ENCODE measurements at regions of chr3 and their contacts with region 1.

Region 1: DNA sequence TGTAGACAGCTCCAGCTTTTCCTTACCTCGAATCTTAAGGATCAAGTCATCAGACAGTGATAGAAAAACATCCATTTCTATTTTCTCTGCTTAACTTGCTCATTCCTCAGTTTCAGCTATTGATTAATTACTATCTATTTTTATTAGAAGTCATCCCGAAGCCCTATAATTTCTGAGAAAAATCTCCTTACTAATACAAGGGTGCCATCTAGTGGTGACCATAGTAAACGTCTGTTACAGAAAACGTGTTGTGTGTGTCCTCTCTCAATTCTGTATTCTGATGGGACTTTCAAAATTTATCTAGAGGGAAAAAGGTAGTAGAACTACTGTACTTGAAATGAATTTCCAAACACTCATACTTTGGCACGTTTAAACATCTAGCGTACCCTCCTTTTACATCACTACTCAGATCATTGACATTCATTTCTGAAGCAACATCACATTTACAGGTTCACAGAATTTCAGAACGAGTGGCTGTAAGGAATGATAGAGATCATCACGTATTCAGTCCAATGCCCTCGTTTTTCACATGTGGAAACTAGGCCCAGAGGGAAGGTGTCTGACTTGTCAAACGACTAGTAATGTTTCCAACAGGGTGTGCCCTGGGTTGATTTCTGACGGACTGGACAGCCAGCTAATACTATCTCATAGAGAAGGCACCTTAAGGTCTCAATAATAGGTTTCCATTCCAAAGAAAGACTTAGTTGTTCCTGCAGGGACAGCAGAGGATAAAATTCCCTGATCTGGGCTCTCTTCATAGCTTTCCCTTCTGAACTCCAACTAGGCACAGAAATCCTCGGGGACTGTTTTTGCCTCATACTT is 25.6 kb downstream of the HACD2 start:
- DNase-seq: peak; percentile 68
- ATAC-seq: peak; percentile 51
- H3K4me3 ChIP-seq: no peak overlapping the region
- H3K4me3 Mint-ChIP-seq: no peak overlapping the region
- H3K27ac ChIP-seq: no peak overlapping the region
- H3K27ac Mint-ChIP-seq: no peak overlapping the region
- H3K4me1 ChIP-seq: no peaks in the 10 kb centered on the region
- H3K4me1 Mint-ChIP-seq: no peaks in the 10 kb centered on the region
- H3K27me3 ChIP-seq: no peaks in the 10 kb centered on the region
- H3K27me3 Mint-ChIP-seq: no peaks in the 10 kb centered on the region
- CTCF ChIP-seq: peak; percentile 94

Region 2: GRCh38 chr3:123328851-123329635 is 230.2 kb before region 1 on chr3:
- CTCF ChIA-PET with region 1: interaction called, 36 read pairs
- POLR2A ChIA-PET with region 1: no interaction called
- intact Hi-C with region 1: no loop called
- DNase-seq: peak; percentile 73
- ATAC-seq: peak; percentile 73
- H3K4me3 ChIP-seq: no peak overlapping the region
- H3K4me3 Mint-ChIP-seq: no peak overlapping the region
- H3K27ac ChIP-seq: no peak overlapping the region
- H3K27ac Mint-ChIP-seq: no peak overlapping the region
- H3K4me1 ChIP-seq: no peaks in the 10 kb centered on the region
- H3K4me1 Mint-ChIP-seq: no peaks in the 10 kb centered on the region
- H3K27me3 ChIP-seq: peaks cover 0 to 2% (median 0%) of the 10 kb centered on the region in 4 experiments
- H3K27me3 Mint-ChIP-seq: peaks cover 12% of the 10 kb centered on the region
- CTCF ChIP-seq: peak; percentile 89

Region 3: GRCh38 chr3:123449102-123449996 is 109.9 kb before region 1 on chr3:
- CTCF ChIA-PET with region 1: interaction called, 4 read pairs
- POLR2A ChIA-PET with region 1: no interaction called
- intact Hi-C with region 1: loop called (anchors 2 kb)
- DNase-seq: peak; percentile 42
- ATAC-seq: no peak
- H3K4me3 ChIP-seq: peak overlapping the region in 4 of 5 experiments; percentile 21 to 65 (median 51)
- H3K4me3 Mint-ChIP-seq: peak overlapping the region; percentile 71
- H3K27ac ChIP-seq: no peak overlapping the region
- H3K27ac Mint-ChIP-seq: no peak overlapping the region
- H3K4me1 ChIP-seq: peaks cover 10 to 13% of the 10 kb centered on the region in 2 donors
- H3K4me1 Mint-ChIP-seq: peaks cover 10% of the 10 kb centered on the region
- H3K27me3 ChIP-seq: peaks cover 0 to 54% (median 26%) of the 10 kb centered on the region in 4 experiments
- H3K27me3 Mint-ChIP-seq: peaks cover 47% of the 10 kb centered on the region
- CTCF ChIP-seq: no peak

Region 4: DNA sequence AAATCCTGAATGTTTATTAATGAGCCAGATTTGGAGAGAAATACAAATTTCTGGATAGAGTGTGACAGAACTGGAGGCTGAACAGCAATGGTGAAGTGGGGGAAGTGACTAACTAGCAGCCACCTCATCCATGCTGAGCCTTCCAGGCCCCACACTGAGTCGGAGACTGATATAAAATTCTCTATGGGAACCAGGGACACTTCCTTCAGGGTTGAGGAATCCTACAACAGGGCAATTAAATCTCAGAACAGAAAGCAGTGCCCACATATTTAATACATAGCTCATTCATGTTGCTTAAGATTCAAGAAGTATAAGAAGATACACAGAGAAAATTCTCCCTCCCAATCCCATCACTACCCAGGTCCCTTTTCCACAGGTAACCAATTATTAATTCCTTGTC is 23.7 kb before region 1 on chr3:
- CTCF ChIA-PET with region 1: interaction called, 13 read pairs
- POLR2A ChIA-PET with region 1: no interaction called
- intact Hi-C with region 1: no loop called
- DNase-seq: no peak
- ATAC-seq: no peak
- H3K4me3 ChIP-seq: no peak overlapping the region
- H3K4me3 Mint-ChIP-seq: no peak overlapping the region
- H3K27ac ChIP-seq: no peak overlapping the region
- H3K27ac Mint-ChIP-seq: no peak overlapping the region
- H3K4me1 ChIP-seq: no peaks in the 10 kb centered on the region
- H3K4me1 Mint-ChIP-seq: no peaks in the 10 kb centered on the region
- H3K27me3 ChIP-seq: no peaks in the 10 kb centered on the region
- H3K27me3 Mint-ChIP-seq: no peaks in the 10 kb centered on the region
- CTCF ChIP-seq: no peak

Region 5: GRCh38 chr3:123576122-123576521 is 16.9 kb after region 1 on chr3:
- CTCF ChIA-PET with region 1: interaction called, 31 read pairs
- POLR2A ChIA-PET with region 1: no interaction called
- intact Hi-C with region 1: no loop called
- DNase-seq: peak; percentile 62
- ATAC-seq: peak; percentile 81
- H3K4me3 ChIP-seq: peak overlapping the region in 1 of 5 experiments; percentile 8
- H3K4me3 Mint-ChIP-seq: peak overlapping the region; percentile 19
- H3K27ac ChIP-seq: peak overlapping the region in 1 of 2 donors; percentile 66
- H3K27ac Mint-ChIP-seq: peak overlapping the region; percentile 60
- H3K4me1 ChIP-seq: peaks cover 25 to 28% of the 10 kb centered on the region in 2 donors
- H3K4me1 Mint-ChIP-seq: peaks cover 48% of the 10 kb centered on the region
- H3K27me3 ChIP-seq: no peaks in the 10 kb centered on the region
- H3K27me3 Mint-ChIP-seq: no peaks in the 10 kb centered on the region
- CTCF ChIP-seq: no peak